ENCODE measurements at regions of chr20 and their contacts with region 1.

Region 1: DNA sequence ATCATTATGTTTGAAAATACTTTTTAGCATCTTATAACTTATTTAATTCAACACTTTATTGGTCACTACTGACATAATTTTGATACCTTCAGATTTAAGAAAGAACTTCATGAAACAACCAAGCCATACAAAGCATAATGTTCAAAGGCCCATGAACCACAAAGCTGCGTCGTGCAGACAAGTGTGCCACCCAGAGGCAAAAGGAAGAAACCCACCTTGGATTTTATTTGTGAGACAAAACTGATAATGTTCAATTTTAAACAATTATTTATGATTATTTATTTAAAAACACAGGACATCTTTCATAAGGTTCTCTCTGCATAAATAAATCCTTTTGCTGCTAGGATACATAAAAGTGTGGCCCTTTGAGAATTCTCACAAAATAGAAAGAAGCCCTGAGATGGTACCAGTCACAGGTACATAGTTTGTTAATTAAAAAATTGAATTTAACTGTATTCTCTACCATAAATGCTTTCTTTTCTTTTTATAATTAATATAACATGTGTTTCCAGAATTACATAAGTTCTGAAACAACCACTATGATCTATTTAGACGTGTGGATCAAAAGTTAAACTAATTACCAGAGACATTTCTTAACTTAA is 143.7 kb downstream of the RALGAPA2 start:
- DNase-seq: peak; percentile 58
- ATAC-seq: peak; percentile 67
- H3K4me3 ChIP-seq: no peak overlapping the region
- H3K27ac ChIP-seq: no peak overlapping the region
- H3K4me1 ChIP-seq: peaks cover 7% of the 10 kb centered on the region
- H3K27me3 ChIP-seq: no peaks in the 10 kb centered on the region
- CTCF ChIP-seq: peak; percentile 86
- EP300 ChIP-seq: no peak
- POLR2A ChIP-seq: no peak
- RAD21 ChIP-seq: peak; percentile 83

Region 2: DNA sequence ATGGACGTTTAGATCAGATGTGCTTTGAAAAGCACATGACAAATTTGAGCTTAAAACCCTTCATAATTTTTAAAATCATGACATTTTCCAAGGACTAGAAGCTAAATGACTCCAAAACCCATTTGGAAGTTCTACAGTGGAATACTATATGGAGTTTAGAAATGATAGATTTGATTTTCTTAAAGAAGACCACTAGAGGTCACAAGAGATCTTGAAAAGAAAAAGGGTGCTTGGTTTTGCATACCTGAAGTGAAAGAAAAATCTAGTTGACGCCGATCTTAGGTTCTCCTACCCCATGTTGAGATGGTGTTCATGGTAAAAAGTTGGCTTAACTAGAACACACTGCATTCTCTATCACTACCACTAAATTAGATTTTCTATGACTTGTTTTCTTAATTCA is 484.9 kb before region 1 on chr20:
- CTCF ChIA-PET with region 1: interaction called, 9 read pairs
- POLR2A ChIA-PET with region 1: no interaction called
- in situ Hi-C with region 1: loop called (anchors 10 kb)
- intact Hi-C with region 1: loop called (anchors 1 kb)
- DNase-seq: peak; percentile 52
- ATAC-seq: peak; percentile 84
- H3K4me3 ChIP-seq: no peak overlapping the region; a peak in 1 of 6 replicates
- H3K27ac ChIP-seq: no peak overlapping the region
- H3K4me1 ChIP-seq: 0 out of 2 replicates have a peak, but pooled peaks cover 12% of the 10 kb centered on the region
- H3K27me3 ChIP-seq: peaks cover 0 to 17% of the 10 kb centered on the region in 2 experiments; a peak in 2 of 5 replicates
- CTCF ChIP-seq: peak; percentile 73
- EP300 ChIP-seq: no peak
- POLR2A ChIP-seq: no peak
- RAD21 ChIP-seq: peak; percentile 21; the same call in 1 of the 2 replicates

Region 3: GRCh38 chr20:20130399-20130798 is 438.3 kb before region 1 on chr20:
- CTCF ChIA-PET with region 1: interaction called, 6 read pairs
- POLR2A ChIA-PET with region 1: no interaction called
- in situ Hi-C with region 1: no loop called
- intact Hi-C with region 1: loop called (anchors 1 kb)
- DNase-seq: peak; percentile 59
- ATAC-seq: peak; percentile 92
- H3K4me3 ChIP-seq: no peak overlapping the region
- H3K27ac ChIP-seq: no peak overlapping the region
- H3K4me1 ChIP-seq: no peaks in the 10 kb centered on the region
- H3K27me3 ChIP-seq: no peaks in the 10 kb centered on the region
- CTCF ChIP-seq: peak; percentile 84
- EP300 ChIP-seq: no peak
- POLR2A ChIP-seq: no peak
- RAD21 ChIP-seq: peak; percentile 82

Region 4: DNA sequence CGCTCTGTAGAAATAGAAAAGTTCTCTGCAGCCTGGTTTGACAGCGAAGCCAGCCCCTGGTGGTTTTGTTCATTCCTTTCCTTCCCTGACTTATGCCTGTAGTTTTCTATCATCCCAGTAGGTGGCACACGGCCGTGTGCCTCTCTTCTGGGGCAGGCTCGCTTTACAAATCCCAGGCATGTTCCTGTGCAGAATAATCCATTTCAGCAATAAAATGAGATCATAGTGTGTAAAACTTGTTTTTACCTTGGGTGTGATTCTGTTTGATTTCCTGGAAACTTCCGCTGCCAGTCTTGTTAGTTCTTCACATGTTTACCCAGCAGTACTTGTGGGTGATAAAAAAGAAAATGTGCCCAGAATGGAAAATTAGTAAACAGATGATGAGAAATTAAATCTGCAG is 208.2 kb before region 1 on chr20:
- CTCF ChIA-PET with region 1: interaction called, 55 read pairs
- POLR2A ChIA-PET with region 1: no interaction called
- in situ Hi-C with region 1: loop called (anchors 5 kb)
- intact Hi-C with region 1: loop called (anchors 1 kb)
- DNase-seq: peak; percentile 67
- ATAC-seq: peak; percentile 89
- H3K4me3 ChIP-seq: no peak overlapping the region
- H3K27ac ChIP-seq: no peak overlapping the region
- H3K4me1 ChIP-seq: peaks cover 20% of the 10 kb centered on the region; the same call in 1 of the 2 replicates
- H3K27me3 ChIP-seq: peaks cover 11 to 42% of the 10 kb centered on the region in 2 experiments
- CTCF ChIP-seq: peak; percentile 92
- EP300 ChIP-seq: no peak
- POLR2A ChIP-seq: no peak
- RAD21 ChIP-seq: peak; percentile 80

Region 5: GRCh38 chr20:20407891-20408805 is 160.6 kb before region 1 on chr20:
- CTCF ChIA-PET with region 1: no interaction called
- POLR2A ChIA-PET with region 1: no interaction called
- in situ Hi-C with region 1: no loop called
- intact Hi-C with region 1: loop called (anchors 1 kb)
- DNase-seq: peak; percentile 22
- ATAC-seq: peak; percentile 59; the same call in 2 of the 3 replicates
- H3K4me3 ChIP-seq: no peak overlapping the region
- H3K27ac ChIP-seq: no peak overlapping the region
- H3K4me1 ChIP-seq: no peaks in the 10 kb centered on the region
- H3K27me3 ChIP-seq: no peaks in the 10 kb centered on the region
- CTCF ChIP-seq: peak; percentile 38
- EP300 ChIP-seq: no peak
- POLR2A ChIP-seq: no peak
- RAD21 ChIP-seq: peak; percentile 23; the same call in 1 of the 2 replicates

Region 6: DNA sequence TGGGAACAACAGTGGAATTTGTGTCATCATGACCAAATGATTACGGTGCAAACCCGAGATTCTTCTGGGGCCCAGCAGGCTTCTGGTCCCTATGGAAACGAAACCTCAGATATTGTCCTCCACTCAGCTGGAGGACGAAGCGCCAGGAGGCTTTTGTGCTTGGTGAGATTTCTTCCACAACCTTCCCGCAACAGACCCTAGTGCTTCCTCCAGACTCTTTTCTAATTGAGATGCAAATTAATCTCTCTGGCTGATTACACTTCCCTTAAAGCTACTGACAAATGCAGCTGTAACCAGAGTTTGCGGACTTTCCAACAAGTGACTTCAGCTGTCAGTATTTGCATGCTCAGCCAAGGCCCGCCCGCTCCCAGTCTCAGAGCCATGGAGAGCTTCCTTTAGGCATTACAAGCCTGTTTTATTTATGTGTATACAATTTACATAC is 104.8 kb before region 1 on chr20:
- CTCF ChIA-PET with region 1: interaction called, 7 read pairs
- POLR2A ChIA-PET with region 1: no interaction called
- in situ Hi-C with region 1: loop called (anchors 5 kb)
- intact Hi-C with region 1: loop called (anchors 1 kb)
- DNase-seq: no peak
- ATAC-seq: no peak
- H3K4me3 ChIP-seq: no peak overlapping the region
- H3K27ac ChIP-seq: no peak overlapping the region
- H3K4me1 ChIP-seq: no peaks in the 10 kb centered on the region
- H3K27me3 ChIP-seq: no peaks in the 10 kb centered on the region
- CTCF ChIP-seq: no peak
- EP300 ChIP-seq: no peak
- POLR2A ChIP-seq: no peak
- RAD21 ChIP-seq: no peak